ENCODE measurements at regions of chr20 and their contacts with region 1.

Region 1: DNA sequence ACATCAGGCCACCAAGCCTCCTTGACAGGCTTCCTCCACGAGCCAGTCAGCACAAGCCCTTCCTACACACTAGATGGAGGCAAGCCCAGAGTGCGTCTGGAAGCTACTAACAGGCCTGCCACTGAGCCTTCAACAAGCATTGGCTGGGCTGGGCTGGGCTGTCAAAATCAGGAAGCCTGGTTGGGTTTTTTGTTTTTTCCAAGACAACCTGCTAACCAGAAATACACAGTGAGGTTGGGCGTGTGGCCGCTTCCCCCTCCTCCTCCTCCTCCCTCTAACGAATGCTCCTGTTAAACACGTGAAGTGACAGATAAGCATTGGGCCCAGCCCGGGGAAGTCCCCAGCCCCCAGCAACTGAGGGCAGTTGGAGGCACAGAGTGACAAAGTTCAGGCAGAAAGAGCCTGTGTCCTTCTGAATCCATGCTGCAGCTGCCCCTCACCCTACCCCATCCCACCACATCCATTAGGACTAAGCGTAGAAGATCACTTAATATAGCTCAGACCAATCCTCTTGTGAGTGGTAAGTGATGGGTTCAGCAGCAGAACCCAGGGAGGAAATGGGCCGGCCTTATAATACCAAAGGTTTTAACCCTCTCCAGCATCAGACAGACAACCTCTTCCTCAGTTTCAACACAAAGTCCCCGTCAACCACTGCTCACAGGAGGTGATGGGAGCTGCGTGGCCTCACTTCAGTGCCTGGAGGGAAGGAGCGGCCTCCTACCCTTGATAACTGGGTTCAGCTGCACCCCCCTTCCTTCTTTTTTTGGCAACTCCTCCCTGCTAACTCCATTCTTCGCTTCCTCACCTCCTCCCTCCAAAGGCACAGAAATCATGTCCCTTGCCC is 1.1 kb downstream of the NFATC2 start:
- DNase-seq: peak; percentile 91
- H3K4me3 ChIP-seq: peak overlapping the region in 3 of 4 donors; percentile 36 to 50 (median 47)
- H3K27ac ChIP-seq: peak overlapping the region; percentile 65 to 80 (median 70)
- H3K4me1 ChIP-seq: peaks cover 0 to 30% (median 24%) of the 10 kb centered on the region in 4 donors
- H3K27me3 ChIP-seq: peaks cover 0 to 17% (median 0%) of the 10 kb centered on the region in 3 donors
- CTCF ChIP-seq: no peak
- EP300 ChIP-seq: no peak
- POLR2A ChIP-seq: no peak

Region 2: DNA sequence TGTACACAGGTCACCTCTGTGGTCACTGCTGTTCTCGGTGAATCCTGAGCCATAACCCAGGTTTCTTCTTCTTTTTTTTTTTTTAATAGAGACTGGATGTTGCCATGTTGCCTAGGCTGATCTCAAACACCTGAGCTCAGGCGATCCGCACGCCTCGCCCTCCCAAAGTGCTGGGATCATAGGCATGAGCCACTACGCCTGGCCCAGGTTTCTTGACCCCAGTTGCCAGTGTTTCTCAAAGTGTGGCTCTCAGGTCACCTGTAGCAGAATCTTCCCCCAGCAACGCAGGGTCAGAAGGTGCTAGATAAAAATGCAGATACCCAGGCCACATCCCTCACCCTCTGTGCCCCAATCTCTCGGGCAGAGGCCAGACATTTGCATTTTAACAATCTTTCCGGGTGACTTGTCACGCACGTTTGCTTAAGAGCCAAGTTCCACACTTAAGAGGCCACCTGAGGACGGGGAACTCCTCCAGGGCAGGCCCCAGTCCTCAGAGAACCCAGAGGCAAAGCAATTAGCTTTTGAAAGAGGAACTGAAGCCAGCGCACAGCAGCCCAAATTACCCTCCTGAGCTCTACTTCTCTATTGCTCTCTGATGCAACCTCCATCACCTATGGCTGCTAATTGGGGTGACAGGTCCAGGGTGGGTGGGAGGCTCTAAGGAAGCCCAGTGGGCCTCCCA is 80.7 kb before region 1 on chr20:
- intact Hi-C with region 1: loop called (anchors 5 kb)
- DNase-seq: no peak
- H3K4me3 ChIP-seq: no peak overlapping the region
- H3K27ac ChIP-seq: no peak overlapping the region
- H3K4me1 ChIP-seq: peaks cover 0 to 42% (median 35%) of the 10 kb centered on the region in 4 donors
- H3K27me3 ChIP-seq: no peaks in the 10 kb centered on the region
- CTCF ChIP-seq: no peak
- EP300 ChIP-seq: no peak
- POLR2A ChIP-seq: no peak

Region 3: GRCh38 chr20:51487565-51488268 is 53.7 kb before region 1 on chr20:
- intact Hi-C with region 1: no loop called
- DNase-seq: no peak
- H3K4me3 ChIP-seq: no peak overlapping the region
- H3K27ac ChIP-seq: peak overlapping the region; percentile 17 to 41 (median 33)
- H3K4me1 ChIP-seq: peaks cover 0 to 17% (median 7%) of the 10 kb centered on the region in 4 donors
- H3K27me3 ChIP-seq: no peaks in the 10 kb centered on the region
- CTCF ChIP-seq: no peak
- EP300 ChIP-seq: no peak
- POLR2A ChIP-seq: no peak